HepG2 (cell line): ENCODE measurements at regions of chr2 and their contacts with region 1.

Region 1: DNA sequence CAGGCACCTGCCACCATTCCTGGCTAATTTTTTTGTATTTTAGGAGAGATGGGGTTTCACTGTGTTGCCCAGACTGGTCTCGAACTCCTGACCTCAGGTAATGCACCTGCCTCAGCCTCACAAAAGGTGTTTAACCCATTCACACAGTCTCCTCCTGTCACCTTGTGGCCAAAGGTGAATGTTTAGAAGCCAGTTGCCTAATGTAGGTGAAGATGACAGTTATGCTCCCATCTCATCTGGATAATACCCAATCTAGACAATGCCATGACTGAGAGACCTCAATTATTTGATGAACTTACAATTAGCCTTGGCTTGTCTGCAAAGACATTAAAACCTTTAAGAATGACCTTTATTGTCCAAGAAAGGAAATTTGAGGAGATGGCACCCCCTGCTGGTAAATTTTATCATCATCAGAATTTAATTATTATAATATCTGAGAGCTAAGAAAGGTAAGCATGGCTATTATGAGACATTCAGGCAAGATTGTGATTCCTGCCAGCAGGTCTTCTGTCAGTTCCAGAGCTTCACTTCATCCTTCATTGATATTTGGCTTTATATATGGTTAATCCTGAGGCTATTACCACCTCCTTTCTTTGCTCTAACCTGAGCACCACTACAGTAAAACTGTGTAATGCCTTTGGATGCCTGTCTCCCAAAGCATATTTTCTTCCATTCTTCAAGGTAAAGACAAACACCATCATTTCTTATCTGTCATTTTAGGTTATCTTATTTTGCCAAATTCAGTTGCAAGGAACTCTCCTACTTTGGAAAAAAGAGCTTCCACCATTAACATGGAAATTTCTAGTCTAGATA is 117.6 kb downstream of the FAM124B start:
- DNase-seq: peak; percentile 73
- ATAC-seq: peak; percentile 85
- H3K4me3 ChIP-seq: no peak overlapping the region
- H3K27ac ChIP-seq: no peak overlapping the region
- H3K4me1 ChIP-seq: no peaks in the 10 kb centered on the region
- H3K27me3 ChIP-seq: no peaks in the 10 kb centered on the region
- CTCF ChIP-seq: peak; percentile 97
- EP300 ChIP-seq: no peak
- POLR2A ChIP-seq: no peak
- RAD21 ChIP-seq: peak; percentile 92

Region 2: DNA sequence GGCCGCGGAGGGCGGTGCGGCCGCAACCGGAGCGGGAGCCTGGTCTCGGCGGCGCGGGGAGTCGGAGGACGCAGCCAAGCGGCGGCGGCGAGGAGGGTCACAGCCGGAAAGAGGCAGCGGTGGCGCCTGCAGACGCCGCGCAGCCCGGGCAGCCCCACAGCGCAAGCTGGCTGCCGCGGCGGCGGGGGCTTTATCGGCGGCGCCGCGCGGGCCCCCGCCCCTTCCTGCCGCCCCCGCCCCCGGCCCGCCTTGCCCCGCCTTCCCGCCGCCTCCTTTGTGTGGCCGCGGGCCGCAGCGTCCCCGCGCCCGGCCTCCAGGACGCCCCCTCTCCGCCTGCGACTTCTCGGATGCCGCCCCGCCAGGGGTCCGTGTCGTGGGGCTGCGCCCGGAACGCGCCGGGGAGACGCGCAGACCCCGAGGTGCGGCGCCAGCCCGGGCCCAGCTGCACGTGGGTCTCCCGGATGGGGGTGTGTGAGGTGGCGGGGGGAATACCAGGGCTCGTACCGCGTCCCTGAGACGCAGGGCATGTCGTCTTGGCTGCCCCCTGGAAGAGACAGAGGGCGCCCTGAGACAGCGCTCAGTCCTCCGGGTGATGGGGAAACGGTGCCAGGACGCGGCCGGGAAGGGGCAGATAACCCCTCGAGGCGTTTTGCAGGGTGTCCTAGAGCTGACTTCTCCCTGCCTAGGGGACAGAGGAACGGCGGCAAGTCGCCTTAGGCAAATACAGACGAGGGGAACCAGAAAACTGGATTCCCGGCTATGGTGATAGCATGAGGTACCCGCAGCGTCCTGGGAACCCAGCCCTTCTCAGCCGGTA is 245.0 kb before region 1 on chr2 and contains the start of gene SERPINE2:
- CTCF ChIA-PET with region 1: interaction called, 24 read pairs
- POLR2A ChIA-PET with region 1: interaction called, 5 read pairs
- in situ Hi-C with region 1: no loop called
- intact Hi-C with region 1: loop called (anchors 1 kb)
- DNase-seq: no peak
- ATAC-seq: peak; percentile 72
- H3K4me3 ChIP-seq: peak within 1 kb of the TSS; percentile 69 to 84 (median 77)
- H3K27ac ChIP-seq: no peak within 1 kb of the TSS
- H3K4me1 ChIP-seq: peaks cover 32% of the 10 kb centered on the region
- H3K27me3 ChIP-seq: peaks cover 3 to 54% of the 10 kb centered on the region in 2 experiments; a peak in 4 of 5 replicates
- CTCF ChIP-seq: peak; percentile 93
- EP300 ChIP-seq: no peak
- POLR2A ChIP-seq: no peak
- RAD21 ChIP-seq: peak; percentile 47
- total RNA-seq, gene SERPINE2: 5.5 and 7.9 TPM in 2 replicates